WTC11 (cell line): ENCODE measurements at regions of chr19 and their contacts with region 1.

Region 1: GRCh38 chr19:1064661-1065605 is 2.0 kb upstream of the ARHGAP45 start:
- DNase-seq: peak; percentile 80
- ATAC-seq: peak; percentile 61
- H3K4me3 Mint-ChIP-seq: peak overlapping the region; percentile 65
- H3K27ac Mint-ChIP-seq: no peak overlapping the region; the same call in 1 of the 2 replicates
- H3K4me1 Mint-ChIP-seq: peaks cover 17% of the 10 kb centered on the region
- H3K27me3 Mint-ChIP-seq: peaks cover 26% of the 10 kb centered on the region
- CTCF ChIP-seq: peak; percentile 55

Region 2: GRCh38 chr19:970695-971094 is 94.2 kb before region 1 on chr19:
- CTCF ChIA-PET with region 1: no interaction called
- POLR2A ChIA-PET with region 1: no interaction called
- DNase-seq: no peak
- ATAC-seq: 0 out of 2 replicates have a peak, but pooled peaks have one; percentile 32
- H3K4me3 Mint-ChIP-seq: no peak overlapping the region
- H3K27ac Mint-ChIP-seq: no peak overlapping the region
- H3K4me1 Mint-ChIP-seq: peaks cover 3% of the 10 kb centered on the region; the same call in 1 of the 2 replicates
- H3K27me3 Mint-ChIP-seq: no peaks in the 10 kb centered on the region
- CTCF ChIP-seq: peak; percentile 87

Region 3: GRCh38 chr19:1026189-1027019 is 38.5 kb before region 1 on chr19 and contains the start of gene CNN2:
- CTCF ChIA-PET with region 1: interaction called, 33 read pairs
- POLR2A ChIA-PET with region 1: interaction called, 9 read pairs
- DNase-seq: peak; percentile 84
- ATAC-seq: peak; percentile 69
- H3K4me3 Mint-ChIP-seq: peak within 1 kb of the TSS; percentile 92
- H3K27ac Mint-ChIP-seq: peak within 1 kb of the TSS; percentile 94
- H3K4me1 Mint-ChIP-seq: peaks cover 3% of the 10 kb centered on the region
- H3K27me3 Mint-ChIP-seq: no peaks in the 10 kb centered on the region
- CTCF ChIP-seq: no peak
- total RNA-seq, gene CNN2: 387 to 391 TPM (median 390 TPM) in 3 replicates

Region 4: DNA sequence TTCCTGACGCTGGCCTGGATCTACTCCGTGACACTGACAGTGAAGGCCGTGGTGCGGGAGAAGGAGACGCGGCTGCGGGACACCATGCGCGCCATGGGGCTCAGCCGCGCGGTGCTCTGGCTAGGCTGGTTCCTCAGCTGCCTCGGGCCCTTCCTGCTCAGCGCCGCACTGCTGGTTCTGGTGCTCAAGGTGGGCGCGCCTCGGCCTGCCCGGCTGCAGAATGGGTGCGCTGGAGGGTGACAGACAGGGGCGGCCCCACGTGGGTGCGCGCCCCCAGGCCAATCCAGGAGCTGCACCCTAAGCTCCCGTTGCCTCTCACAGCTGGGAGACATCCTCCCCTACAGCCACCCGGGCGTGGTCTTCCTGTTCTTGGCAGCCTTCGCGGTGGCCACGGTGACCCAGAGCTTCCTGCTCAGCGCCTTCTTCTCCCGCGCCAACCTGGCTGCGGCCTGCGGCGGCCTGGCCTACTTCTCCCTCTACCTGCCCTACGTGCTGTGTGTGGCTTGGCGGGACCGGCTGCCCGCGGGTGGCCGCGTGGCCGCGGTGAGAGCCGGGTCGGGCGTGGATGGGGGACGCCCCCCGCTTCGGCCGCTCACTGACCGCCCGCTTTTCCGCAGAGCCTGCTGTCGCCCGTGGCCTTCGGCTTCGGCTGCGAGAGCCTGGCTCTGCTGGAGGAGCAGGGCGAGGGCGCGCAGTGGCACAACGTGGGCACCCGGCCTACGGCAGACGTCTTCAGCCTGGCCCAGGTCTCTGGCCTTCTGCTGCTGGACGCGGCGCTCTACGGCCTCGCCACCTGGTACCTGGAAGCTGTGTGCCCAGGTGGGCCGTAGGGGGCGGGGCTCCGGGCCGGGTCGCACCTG is 17.9 kb before region 1 on chr19:
- CTCF ChIA-PET with region 1: interaction called, 17 read pairs
- POLR2A ChIA-PET with region 1: interaction called, 5 read pairs
- DNase-seq: no peak
- ATAC-seq: no peak
- H3K4me3 Mint-ChIP-seq: no peak overlapping the region
- H3K27ac Mint-ChIP-seq: no peak overlapping the region
- H3K4me1 Mint-ChIP-seq: no peaks in the 10 kb centered on the region
- H3K27me3 Mint-ChIP-seq: no peaks in the 10 kb centered on the region
- CTCF ChIP-seq: no peak

Region 5: GRCh38 chr19:1082172-1082927 is 17.4 kb after region 1 on chr19:
- CTCF ChIA-PET with region 1: interaction called, 109 read pairs
- POLR2A ChIA-PET with region 1: interaction called, 22 read pairs
- DNase-seq: peak; percentile 99
- ATAC-seq: peak; percentile 83
- H3K4me3 Mint-ChIP-seq: peak overlapping the region; percentile 67
- H3K27ac Mint-ChIP-seq: peak overlapping the region; percentile 90
- H3K4me1 Mint-ChIP-seq: no peaks in the 10 kb centered on the region; the same call in 1 of the 2 replicates
- H3K27me3 Mint-ChIP-seq: no peaks in the 10 kb centered on the region
- CTCF ChIP-seq: no peak

Region 6: DNA sequence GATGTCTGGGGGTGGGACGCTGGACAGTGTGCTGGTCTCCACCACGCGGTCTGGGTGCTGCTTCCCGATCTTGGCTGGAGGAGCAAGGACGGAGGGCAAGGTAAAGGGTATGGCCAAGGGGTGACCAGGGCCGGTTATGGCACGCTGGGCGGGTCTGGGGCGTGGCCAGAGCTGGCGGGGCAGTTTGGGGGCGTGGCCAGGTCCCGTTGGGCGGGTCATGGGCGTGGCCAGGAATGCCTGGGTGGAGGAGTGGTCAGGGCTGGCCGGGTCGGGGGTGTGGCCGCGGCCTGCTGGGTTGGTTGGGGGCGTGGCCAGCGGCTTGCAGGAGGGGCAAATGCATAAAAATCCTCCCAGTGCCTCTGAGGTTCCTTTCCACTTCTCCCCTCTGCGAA is 58.0 kb after region 1 on chr19:
- CTCF ChIA-PET with region 1: interaction called, 12 read pairs
- POLR2A ChIA-PET with region 1: no interaction called
- DNase-seq: peak; percentile 97
- ATAC-seq: peak; percentile 93
- H3K4me3 Mint-ChIP-seq: no peak overlapping the region
- H3K27ac Mint-ChIP-seq: peak overlapping the region; percentile 32; the same call in 1 of the 2 replicates
- H3K4me1 Mint-ChIP-seq: no peaks in the 10 kb centered on the region
- H3K27me3 Mint-ChIP-seq: no peaks in the 10 kb centered on the region
- CTCF ChIP-seq: no peak